Gastrocnemius medialis (tissue), 4 donors: ENCODE measurements at regions of chr7 and their contacts with region 1.

Region 1: DNA sequence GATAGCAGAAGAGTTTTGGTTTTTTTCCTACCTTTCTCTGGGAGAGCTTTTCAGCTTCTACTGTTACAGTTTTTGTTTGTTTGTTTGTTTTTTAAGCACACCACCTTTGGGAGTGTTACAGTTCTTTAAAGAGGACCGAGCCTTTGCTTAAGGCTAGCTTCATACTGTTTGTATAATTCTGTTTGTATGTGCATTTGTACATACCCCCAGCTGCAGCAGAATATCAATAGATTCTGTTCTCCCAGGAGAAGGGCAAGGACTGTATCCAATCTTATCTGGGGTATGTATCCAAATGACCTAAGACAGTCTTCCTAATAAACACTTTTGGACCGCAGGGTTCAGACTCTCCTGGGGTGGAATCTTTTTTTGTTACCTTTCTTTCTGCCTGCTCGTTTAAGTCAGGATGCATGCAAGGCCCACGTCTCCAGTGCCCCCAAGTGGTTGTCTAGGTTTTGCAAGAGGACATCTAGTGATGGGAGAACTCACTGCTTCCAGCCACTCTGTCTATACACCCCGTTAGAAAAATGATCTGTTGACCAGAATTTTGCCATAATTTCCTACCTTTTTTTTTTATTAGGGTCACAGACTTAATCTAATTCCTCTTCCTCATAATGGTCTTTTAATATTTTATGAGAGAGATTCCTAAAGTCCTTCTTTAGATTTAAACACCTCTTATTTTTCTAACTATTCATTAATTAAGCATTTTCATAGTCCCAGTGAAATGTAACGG is 23.9 kb downstream of the NRF1 start:
- DNase-seq: peak; percentile 7 to 46
- ATAC-seq: peak; percentile 70 to 94
- H3K4me3 ChIP-seq: no peak overlapping the region
- H3K27ac ChIP-seq: no peak overlapping the region
- H3K4me1 ChIP-seq: peaks cover 9 to 10% of the 10 kb centered on the region in 2 donors
- H3K27me3 ChIP-seq: no peaks in the 10 kb centered on the region
- CTCF ChIP-seq: peak; percentile 33 to 80 (median 63)
- POLR2A ChIP-seq: no peak

Region 2: DNA sequence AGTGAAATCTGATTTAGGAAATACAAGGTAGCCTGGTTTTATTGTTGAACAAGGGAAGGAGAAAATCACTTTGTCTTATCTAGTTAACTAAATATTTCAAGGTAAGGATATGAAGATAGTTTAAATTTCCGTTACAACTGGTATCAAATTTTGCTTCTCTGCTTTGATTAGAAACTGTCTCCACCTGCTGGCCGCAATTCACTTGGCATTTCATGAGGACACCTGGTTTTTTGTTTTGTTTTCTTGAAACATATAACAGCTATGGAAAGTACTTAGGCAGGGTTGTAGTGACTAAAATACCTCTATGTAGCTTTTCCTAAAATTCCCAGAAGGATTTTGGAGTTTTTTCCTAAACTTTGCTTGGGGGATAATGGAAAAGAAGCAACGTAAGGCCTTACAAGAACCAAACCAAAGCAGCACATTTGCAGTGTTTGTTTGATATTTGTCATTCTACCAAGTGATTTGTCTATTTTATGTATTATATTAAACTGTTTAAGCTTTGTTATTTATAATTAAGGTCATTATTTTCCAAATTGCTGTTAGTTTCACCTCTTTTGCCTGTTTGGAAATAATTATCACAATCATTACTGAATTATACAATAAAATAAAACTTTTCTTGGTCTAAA is 337.1 kb before region 1 on chr7:
- in situ Hi-C with region 1: no loop called
- intact Hi-C with region 1: no loop called
- DNase-seq: peak in 1 of 2 donors; percentile 32
- ATAC-seq: no peak
- H3K4me3 ChIP-seq: no peak overlapping the region
- H3K27ac ChIP-seq: no peak overlapping the region
- H3K4me1 ChIP-seq: peaks cover 16 to 27% of the 10 kb centered on the region in 2 donors
- H3K27me3 ChIP-seq: no peaks in the 10 kb centered on the region
- CTCF ChIP-seq: peak; percentile 58 to 77 (median 66)
- POLR2A ChIP-seq: no peak

Region 3: GRCh38 chr7:129522088-129522970 is 113.1 kb before region 1 on chr7:
- in situ Hi-C with region 1: no loop called
- intact Hi-C with region 1: no loop called
- DNase-seq: no peak
- ATAC-seq: no peak
- H3K4me3 ChIP-seq: no peak overlapping the region
- H3K27ac ChIP-seq: no peak overlapping the region
- H3K4me1 ChIP-seq: no peaks in the 10 kb centered on the region
- H3K27me3 ChIP-seq: peaks cover 0 to 3% (median 0%) of the 10 kb centered on the region in 3 donors
- CTCF ChIP-seq: no peak
- POLR2A ChIP-seq: no peak

Region 4: DNA sequence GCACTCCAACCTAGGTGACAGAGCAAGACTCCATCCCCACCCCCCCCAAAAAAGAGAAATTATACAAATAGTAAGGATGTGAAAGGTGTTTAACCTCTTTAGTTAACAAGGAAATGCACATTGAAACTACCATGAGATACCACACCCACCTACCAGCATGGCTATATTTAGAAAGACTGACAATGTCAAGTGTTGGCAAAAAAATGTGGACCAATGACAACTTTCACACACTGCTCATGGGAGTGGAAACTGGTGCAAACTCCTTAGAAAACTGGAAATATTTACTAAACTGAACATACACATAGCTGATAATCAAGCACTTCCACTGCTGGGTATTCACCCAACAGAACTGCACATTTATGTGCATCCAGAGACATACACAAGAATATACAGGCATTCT is 47.2 kb before region 1 on chr7:
- in situ Hi-C with region 1: no loop called
- intact Hi-C with region 1: loop called (anchors 10 kb)
- DNase-seq: no peak
- ATAC-seq: no peak
- H3K4me3 ChIP-seq: no peak overlapping the region
- H3K27ac ChIP-seq: no peak overlapping the region
- H3K4me1 ChIP-seq: no peaks in the 10 kb centered on the region
- H3K27me3 ChIP-seq: no peaks in the 10 kb centered on the region
- CTCF ChIP-seq: no peak
- POLR2A ChIP-seq: no peak